ENCODE measurements at regions of chr5 and their contacts with region 1.

Region 1: GRCh38 chr5:135466178-135467050 is 14.3 kb upstream of the TIFAB start:
- DNase-seq: peak in 1 of 2 experiments; percentile 93
- H3K4me3 ChIP-seq: peak overlapping the region; percentile 5 to 57 (median 30); a peak in 7 of 8 replicates
- H3K27ac ChIP-seq: no peak overlapping the region
- H3K4me1 ChIP-seq: peaks cover 0 to 15% (median 8%) of the 10 kb centered on the region in 4 experiments; a peak in 5 of 7 replicates
- H3K27me3 ChIP-seq: peaks cover 52 to 86% (median 68%) of the 10 kb centered on the region in 4 experiments
- CTCF ChIP-seq: peak; percentile 91 to 95 (median 94)
- EP300 ChIP-seq: no peak
- POLR2A ChIP-seq: no peak
- RAD21 ChIP-seq: peak; percentile 95 to 97

Region 2: GRCh38 chr5:135481387-135481786 is 15.0 kb after region 1 on chr5:
- CTCF ChIA-PET with region 1: interaction called, 137 read pairs
- POLR2A ChIA-PET with region 1: interaction called, 3 read pairs
- DNase-seq: no peak
- H3K4me3 ChIP-seq: no peak overlapping the region
- H3K27ac ChIP-seq: no peak overlapping the region
- H3K4me1 ChIP-seq: peaks cover 0 to 24% (median 14%) of the 10 kb centered on the region in 4 experiments; a peak in 6 of 7 replicates
- H3K27me3 ChIP-seq: peaks cover 23 to 84% (median 76%) of the 10 kb centered on the region in 4 experiments
- CTCF ChIP-seq: no peak
- EP300 ChIP-seq: no peak
- POLR2A ChIP-seq: no peak
- RAD21 ChIP-seq: no peak

Region 3: GRCh38 chr5:135508482-135509005 is 42.1 kb after region 1 on chr5:
- CTCF ChIA-PET with region 1: interaction called, 12 read pairs
- POLR2A ChIA-PET with region 1: no interaction called
- DNase-seq: no peak
- H3K4me3 ChIP-seq: peak overlapping the region in 2 of 4 experiments; percentile 15 to 46; a peak in 4 of 8 replicates
- H3K27ac ChIP-seq: no peak overlapping the region
- H3K4me1 ChIP-seq: peaks cover 0 to 7% (median 0%) of the 10 kb centered on the region in 4 experiments; a peak in 1 of 7 replicates
- H3K27me3 ChIP-seq: peaks cover 6 to 52% (median 39%) of the 10 kb centered on the region in 4 experiments
- CTCF ChIP-seq: no peak
- EP300 ChIP-seq: no peak
- POLR2A ChIP-seq: no peak
- RAD21 ChIP-seq: no peak

Region 4: DNA sequence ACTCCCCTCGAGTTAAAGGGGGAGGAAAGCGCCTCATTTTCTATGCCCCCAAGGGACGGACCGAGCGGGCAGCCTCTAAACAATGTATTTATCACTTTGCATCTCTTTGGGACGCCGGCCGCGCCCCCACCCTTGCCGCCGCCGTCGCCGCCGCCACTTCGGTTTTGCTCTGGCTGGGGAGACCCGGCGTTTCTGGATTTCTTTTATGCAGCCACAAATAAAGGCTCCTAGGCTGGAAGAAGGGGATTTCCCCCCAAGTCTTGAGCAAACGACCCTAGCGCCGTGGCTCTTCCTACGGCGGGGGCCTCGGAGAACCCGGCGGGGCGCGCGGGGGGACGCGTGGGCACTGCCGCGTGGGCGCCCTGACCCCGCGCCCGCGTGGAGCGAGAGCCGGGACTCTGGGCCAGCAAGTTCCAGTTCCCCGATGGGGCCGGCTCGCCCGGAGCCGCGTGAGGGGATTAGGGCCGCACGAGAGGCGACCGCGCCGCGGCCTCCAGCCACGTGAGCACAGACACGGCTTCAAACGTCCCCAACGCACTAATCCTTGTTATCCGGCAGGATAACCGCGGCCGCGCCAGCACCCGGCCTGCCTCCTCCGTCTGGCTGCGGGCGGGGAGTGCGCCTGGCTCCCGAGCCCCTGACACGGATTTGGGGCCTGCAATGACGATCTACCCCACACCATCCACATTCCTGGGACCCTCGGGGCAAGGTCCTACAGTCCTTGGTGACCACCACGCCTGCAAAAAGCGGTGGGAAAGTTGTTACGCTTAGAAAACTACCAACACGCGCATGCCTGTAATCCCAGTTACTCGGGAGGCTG is 77.3 kb after region 1 on chr5:
- CTCF ChIA-PET with region 1: interaction called, 778 read pairs
- POLR2A ChIA-PET with region 1: interaction called, 3 read pairs
- DNase-seq: no peak
- H3K4me3 ChIP-seq: peak overlapping the region; percentile 4 to 50 (median 16); a peak in 6 of 8 replicates
- H3K27ac ChIP-seq: no peak overlapping the region
- H3K4me1 ChIP-seq: peaks cover 6 to 13% (median 10%) of the 10 kb centered on the region in 4 experiments; a peak in 6 of 7 replicates
- H3K27me3 ChIP-seq: peaks cover 97 to 100% (median 99%) of the 10 kb centered on the region in 4 experiments
- CTCF ChIP-seq: no peak
- EP300 ChIP-seq: no peak
- POLR2A ChIP-seq: no peak
- RAD21 ChIP-seq: no peak

Region 5: GRCh38 chr5:135560858-135561257 is 94.4 kb after region 1 on chr5:
- CTCF ChIA-PET with region 1: interaction called, 778 read pairs
- POLR2A ChIA-PET with region 1: interaction called, 3 read pairs
- DNase-seq: peak in 1 of 2 experiments; percentile 92
- H3K4me3 ChIP-seq: 0 out of 8 replicates have a peak overlapping the region, but pooled peaks of 1 of the 4 experiments have one; percentile 15
- H3K27ac ChIP-seq: no peak overlapping the region
- H3K4me1 ChIP-seq: peaks cover 0 to 21% (median 8%) of the 10 kb centered on the region in 4 experiments; a peak in 6 of 7 replicates
- H3K27me3 ChIP-seq: no peaks in the 10 kb centered on the region; a peak in 1 of 7 replicates
- CTCF ChIP-seq: peak; percentile 91 to 92 (median 91)
- EP300 ChIP-seq: no peak
- POLR2A ChIP-seq: no peak
- RAD21 ChIP-seq: peak; percentile 95 to 96

Region 6: DNA sequence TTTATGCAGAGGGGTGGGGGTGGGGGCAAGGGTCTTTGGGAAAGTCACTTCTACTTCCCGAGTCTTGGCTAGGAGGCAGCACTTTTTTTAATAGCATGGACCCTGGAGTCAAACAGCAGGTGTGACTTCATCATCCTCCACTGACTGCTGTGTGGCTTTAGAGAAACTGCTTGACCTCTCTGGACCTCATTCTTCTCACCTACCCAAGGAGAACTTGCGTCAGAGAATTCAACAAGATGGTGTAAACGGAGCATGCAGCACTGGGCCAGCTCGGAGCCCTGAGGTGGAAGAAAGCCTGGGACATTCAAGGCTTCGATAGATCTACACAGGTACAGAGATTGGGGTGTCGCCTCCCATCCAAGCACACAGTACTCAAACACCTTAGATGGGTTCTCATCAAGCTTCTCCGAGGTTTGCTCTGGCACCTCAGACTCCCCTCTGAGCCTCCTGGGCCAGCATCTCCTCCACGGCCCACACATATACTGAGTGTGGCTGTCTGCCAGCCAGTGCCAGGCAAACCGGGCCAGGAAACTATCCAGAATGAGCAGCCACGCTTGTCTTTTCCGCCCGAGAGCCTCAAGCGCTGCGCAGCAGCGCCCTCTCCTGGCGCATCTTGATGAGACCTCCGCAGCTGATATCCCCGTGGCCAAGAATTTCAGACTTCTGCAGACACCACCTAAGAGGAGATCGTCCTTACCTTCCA is 363.4 kb after region 1 on chr5:
- CTCF ChIA-PET with region 1: interaction called, 50 read pairs
- POLR2A ChIA-PET with region 1: no interaction called
- DNase-seq: peak; percentile 36 to 86
- H3K4me3 ChIP-seq: no peak overlapping the region
- H3K27ac ChIP-seq: no peak overlapping the region
- H3K4me1 ChIP-seq: peaks cover 0 to 4% (median 1%) of the 10 kb centered on the region in 4 experiments; a peak in 2 of 7 replicates
- H3K27me3 ChIP-seq: peaks cover 8 to 32% (median 23%) of the 10 kb centered on the region in 4 experiments
- CTCF ChIP-seq: peak in 2 of 3 experiments; percentile 81 to 93; a peak in 3 of 4 replicates
- EP300 ChIP-seq: no peak
- POLR2A ChIP-seq: no peak
- RAD21 ChIP-seq: peak; percentile 88 to 97

Region 7: GRCh38 chr5:135871268-135871915 is 405.0 kb after region 1 on chr5:
- CTCF ChIA-PET with region 1: interaction called, 12 read pairs
- POLR2A ChIA-PET with region 1: no interaction called
- DNase-seq: no peak
- H3K4me3 ChIP-seq: no peak overlapping the region
- H3K27ac ChIP-seq: no peak overlapping the region
- H3K4me1 ChIP-seq: no peaks in the 10 kb centered on the region
- H3K27me3 ChIP-seq: no peaks in the 10 kb centered on the region; a peak in 1 of 7 replicates
- CTCF ChIP-seq: no peak
- EP300 ChIP-seq: no peak
- POLR2A ChIP-seq: no peak
- RAD21 ChIP-seq: no peak

Measured in H1 (cell line).